ENCODE measurements at regions of chr1 and their contacts with region 1.

Region 1: GRCh38 chr1:52296345-52296744 is 69.7 kb downstream of the CC2D1B start:
- DNase-seq: no peak
- ATAC-seq: peak; percentile 63
- H3K4me3 Mint-ChIP-seq: no peak overlapping the region
- H3K27ac Mint-ChIP-seq: no peak overlapping the region
- H3K4me1 Mint-ChIP-seq: no peaks in the 10 kb centered on the region
- H3K27me3 Mint-ChIP-seq: no peaks in the 10 kb centered on the region

Region 2: GRCh38 chr1:52127181-52128180 is 168.9 kb before region 1 on chr1:
- CTCF ChIA-PET with region 1: interaction called, 23 read pairs
- POLR2A ChIA-PET with region 1: no interaction called
- intact Hi-C with region 1: loop called (anchors 1 kb)
- DNase-seq: peak; percentile 39
- ATAC-seq: peak; percentile 65
- H3K4me3 Mint-ChIP-seq: no peak overlapping the region
- H3K27ac Mint-ChIP-seq: no peak overlapping the region
- H3K4me1 Mint-ChIP-seq: peaks cover 4% of the 10 kb centered on the region
- H3K27me3 Mint-ChIP-seq: peaks cover 14% of the 10 kb centered on the region

Region 3: DNA sequence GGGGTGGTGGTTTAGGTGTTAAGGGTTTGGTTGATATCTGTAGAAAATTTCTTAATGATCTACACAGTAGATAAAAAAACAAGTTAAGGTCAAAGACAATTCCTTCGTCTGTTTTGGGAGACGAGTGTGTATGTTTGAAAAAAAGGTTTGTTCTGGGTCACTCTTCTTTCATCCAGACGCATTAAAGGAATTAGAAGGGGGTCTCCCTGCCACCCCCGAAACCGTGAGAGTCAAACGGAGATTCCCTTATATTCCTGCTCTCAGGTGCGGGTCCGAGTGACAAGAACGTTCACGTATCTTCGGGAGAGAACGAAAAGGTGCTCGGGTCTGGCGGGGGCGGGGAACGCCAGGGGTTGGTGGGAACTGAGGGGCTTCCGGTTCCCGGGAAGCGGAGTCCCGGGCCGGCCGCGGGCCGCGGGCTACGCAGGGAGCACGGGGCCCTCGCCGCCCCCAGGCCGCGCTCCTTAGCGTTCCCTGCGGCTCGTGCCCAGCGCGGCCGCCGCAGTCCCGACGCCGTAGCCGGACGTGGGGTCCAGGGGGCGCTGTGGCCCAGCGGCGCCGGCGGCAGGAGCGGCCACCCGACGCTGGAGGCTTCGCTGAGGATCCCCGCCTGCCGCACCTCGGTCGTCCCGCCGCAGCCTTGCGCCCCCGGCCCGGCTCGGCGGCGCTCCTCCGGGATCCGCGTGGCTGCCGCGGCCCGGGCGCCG is 154.7 kb before region 1 on chr1 and contains the start of gene ZFYVE9:
- CTCF ChIA-PET with region 1: no interaction called
- POLR2A ChIA-PET with region 1: no interaction called
- intact Hi-C with region 1: loop called (anchors 1 to 5 kb)
- DNase-seq: peak; percentile 83
- ATAC-seq: peak; percentile 62
- H3K4me3 Mint-ChIP-seq: peak within 1 kb of the TSS; percentile 80
- H3K27ac Mint-ChIP-seq: peak within 1 kb of the TSS; percentile 84
- H3K4me1 Mint-ChIP-seq: peaks cover 43% of the 10 kb centered on the region
- H3K27me3 Mint-ChIP-seq: peaks cover 9% of the 10 kb centered on the region
- total RNA-seq, gene ZFYVE9: 4.3 to 4.7 TPM

Measured in activated CD4-positive, alpha-beta T cell treated with anti-CD3 and anti-CD28 coated beads for 36 hours (primary cell).